Upper lobe of right lung (tissue), 1 donor: ENCODE measurements at regions of chr7 and their contacts with region 1.

Region 1: DNA sequence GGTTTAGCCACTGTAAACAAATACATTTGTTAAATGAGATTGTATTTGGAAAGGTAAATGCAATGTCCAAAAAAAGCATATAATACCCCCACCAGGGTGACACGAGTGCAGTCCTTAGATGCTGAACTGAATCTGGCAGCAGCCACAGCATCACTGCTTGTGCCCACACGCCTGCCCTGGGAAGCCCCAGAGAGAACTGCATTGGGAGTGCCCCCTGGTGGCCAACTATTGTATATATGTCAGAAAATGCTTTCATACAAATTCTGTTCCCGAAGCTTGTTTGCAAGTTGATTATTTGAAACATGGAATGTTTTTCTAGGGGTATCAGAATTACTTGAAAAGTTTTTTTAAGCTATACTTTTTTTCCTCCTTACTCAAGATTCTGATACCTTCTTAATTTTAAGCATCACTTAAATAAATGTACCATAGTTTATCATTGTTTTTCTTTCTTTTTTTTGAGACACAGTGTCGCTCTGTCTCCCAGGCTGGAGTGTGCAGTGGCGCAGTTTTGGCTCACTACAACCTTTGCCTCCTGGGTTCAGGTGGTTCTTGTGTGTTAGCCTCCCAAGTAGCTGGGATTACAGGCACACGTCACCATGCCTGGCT is 50.1 kb downstream of the LANCL2 start:
- DNase-seq: peak; percentile 79
- ATAC-seq: peak; percentile 98
- H3K4me3 ChIP-seq: no peak overlapping the region
- H3K27ac ChIP-seq: no peak overlapping the region
- H3K4me1 ChIP-seq: no peaks in the 10 kb centered on the region
- H3K27me3 ChIP-seq: no peaks in the 10 kb centered on the region
- CTCF ChIP-seq: peak; percentile 89

Region 2: GRCh38 chr7:55026866-55027490 is 388.3 kb before region 1 on chr7:
- intact Hi-C with region 1: no loop called
- DNase-seq: no peak
- ATAC-seq: peak; percentile 86
- H3K4me3 ChIP-seq: no peak overlapping the region
- H3K27ac ChIP-seq: peak overlapping the region; percentile 58
- H3K4me1 ChIP-seq: peaks cover 29% of the 10 kb centered on the region
- H3K27me3 ChIP-seq: no peaks in the 10 kb centered on the region
- CTCF ChIP-seq: no peak

Region 3: DNA sequence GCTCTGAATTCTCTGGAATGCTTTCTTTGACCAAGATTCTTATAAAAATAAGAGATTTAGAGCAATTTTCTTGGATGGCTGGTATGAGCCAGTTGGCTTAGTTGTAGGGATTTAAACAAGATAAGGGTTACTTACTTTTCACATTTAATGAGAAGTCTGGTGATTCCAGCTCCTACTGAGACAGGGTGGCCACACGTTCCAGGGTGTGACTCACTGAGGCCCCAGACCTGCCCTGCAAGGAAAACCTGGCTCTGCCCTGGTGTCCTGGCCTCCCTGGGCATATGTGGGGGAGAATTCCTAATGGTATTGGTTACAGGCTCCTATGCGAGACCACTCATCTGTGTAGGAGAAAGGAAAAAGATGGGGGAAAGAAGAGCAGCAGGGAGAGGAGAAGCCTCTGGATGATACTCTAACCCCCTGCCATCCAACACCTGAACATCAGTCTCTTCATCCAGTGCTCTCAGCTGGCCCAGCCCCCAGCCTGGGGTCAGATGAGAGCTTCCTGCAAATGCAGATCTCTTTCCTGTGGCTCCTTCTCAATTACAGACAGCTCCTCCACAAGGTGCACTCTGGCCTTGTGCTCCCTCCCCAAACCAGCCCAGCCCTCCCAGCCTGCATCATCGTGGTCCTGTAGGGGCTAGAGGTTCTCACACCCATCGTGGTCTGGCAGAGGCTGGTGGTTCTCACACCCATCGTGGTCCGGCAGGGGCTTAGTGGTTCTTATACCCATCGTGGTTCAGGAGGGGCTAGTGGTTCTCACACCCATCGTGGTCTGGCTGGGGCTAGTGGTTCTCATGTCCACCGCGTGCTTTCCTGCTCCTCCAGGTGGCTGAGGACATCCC is 256.5 kb before region 1 on chr7:
- intact Hi-C with region 1: no loop called
- DNase-seq: no peak
- ATAC-seq: no peak
- H3K4me3 ChIP-seq: no peak overlapping the region
- H3K27ac ChIP-seq: no peak overlapping the region
- H3K4me1 ChIP-seq: no peaks in the 10 kb centered on the region
- H3K27me3 ChIP-seq: no peaks in the 10 kb centered on the region
- CTCF ChIP-seq: no peak

Region 4: GRCh38 chr7:55271069-55271626 is 144.1 kb before region 1 on chr7:
- intact Hi-C with region 1: loop called (anchors 10 kb)
- DNase-seq: no peak
- ATAC-seq: no peak
- H3K4me3 ChIP-seq: no peak overlapping the region
- H3K27ac ChIP-seq: no peak overlapping the region
- H3K4me1 ChIP-seq: no peaks in the 10 kb centered on the region
- H3K27me3 ChIP-seq: no peaks in the 10 kb centered on the region
- CTCF ChIP-seq: no peak